ENCODE measurements at regions of chr10 and their contacts with region 1.

Region 1: GRCh38 chr10:60141896-60142559 is 235.7 kb upstream of the CCDC6 start:
- DNase-seq: no peak
- ATAC-seq: no peak

Region 2: DNA sequence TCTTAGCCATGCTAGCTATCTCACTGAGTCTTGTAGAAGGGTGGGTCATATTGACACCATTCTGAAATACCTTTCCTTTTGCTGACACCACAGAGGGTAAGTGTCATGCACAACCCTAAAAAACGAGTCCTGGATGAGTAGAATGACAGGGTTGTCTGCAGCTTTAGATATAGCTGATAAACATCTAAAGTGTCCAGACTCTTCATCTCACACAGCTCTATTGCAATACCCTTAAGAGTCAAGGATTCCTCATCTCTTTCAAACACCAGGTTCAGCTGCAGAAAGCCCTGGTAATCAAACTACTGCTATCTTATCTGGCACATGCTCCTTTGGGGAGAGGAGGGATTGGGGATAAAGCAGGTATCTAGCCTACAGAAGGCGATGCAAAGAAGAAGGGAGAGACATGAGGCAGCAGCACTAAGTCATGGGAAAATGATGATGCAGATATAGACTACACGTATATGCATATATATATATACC is 120.7 kb after region 1 on chr10:
- intact Hi-C with region 1: loop called (anchors 1 kb)
- DNase-seq: no peak
- ATAC-seq: no peak

Region 3: GRCh38 chr10:62109587-62110293 is 1967.7 kb after region 1 on chr10:
- intact Hi-C with region 1: no loop called
- DNase-seq: no peak
- ATAC-seq: peak; percentile 49

Measured in sciatic nerve (tissue), 2 donors.